Activated CD4-positive, alpha-beta memory T cell treated with anti-CD3 and anti-CD28 coated beads, Interleukin-2, amount 10 ng/mL, durations not matched to agents 7 days and 5 days (primary cell): ENCODE measurements at regions of chr14 and their contacts with region 1.

Region 1: DNA sequence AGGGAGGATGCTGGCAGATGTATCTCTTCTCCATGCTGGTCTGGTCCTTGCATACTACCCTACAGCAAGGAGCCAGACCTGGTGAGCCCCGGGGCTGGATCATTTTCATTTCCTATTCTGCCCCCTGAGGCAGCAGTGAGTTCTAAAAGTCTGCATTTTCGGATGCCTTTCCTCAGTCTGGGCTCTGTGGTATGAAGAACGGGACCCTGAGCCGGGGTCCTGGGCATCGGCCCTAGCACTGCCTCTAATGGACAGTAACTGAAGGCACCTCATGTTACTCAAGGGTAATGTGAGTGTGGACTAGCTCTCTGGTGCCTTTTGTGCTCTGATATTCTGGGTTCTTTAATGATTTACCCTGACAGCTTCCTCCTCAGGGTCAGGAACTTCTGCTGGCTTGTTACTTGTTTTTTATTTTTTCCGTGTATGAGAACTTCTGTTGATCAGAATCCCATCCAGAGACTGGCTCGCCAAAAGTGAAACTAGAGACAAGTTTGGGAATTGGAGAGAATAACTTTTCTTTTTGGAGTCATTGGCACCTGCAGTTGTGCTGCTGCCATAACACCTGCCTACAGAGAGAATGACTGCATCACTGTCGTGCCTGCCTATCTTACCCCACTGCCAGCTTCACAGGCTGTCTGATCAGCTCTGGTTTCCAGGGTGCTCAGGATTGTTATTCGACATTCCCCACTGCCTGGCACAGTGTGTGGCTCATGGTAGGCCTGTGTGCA is 62.3 kb downstream of the SUSD6 start:
- DNase-seq: no peak
- H3K4me3 Mint-ChIP-seq: peak overlapping the region; percentile 31
- H3K27ac Mint-ChIP-seq: peak overlapping the region; percentile 95
- H3K4me1 Mint-ChIP-seq: peaks cover 89% of the 10 kb centered on the region
- H3K27me3 Mint-ChIP-seq: no peaks in the 10 kb centered on the region

Region 2: DNA sequence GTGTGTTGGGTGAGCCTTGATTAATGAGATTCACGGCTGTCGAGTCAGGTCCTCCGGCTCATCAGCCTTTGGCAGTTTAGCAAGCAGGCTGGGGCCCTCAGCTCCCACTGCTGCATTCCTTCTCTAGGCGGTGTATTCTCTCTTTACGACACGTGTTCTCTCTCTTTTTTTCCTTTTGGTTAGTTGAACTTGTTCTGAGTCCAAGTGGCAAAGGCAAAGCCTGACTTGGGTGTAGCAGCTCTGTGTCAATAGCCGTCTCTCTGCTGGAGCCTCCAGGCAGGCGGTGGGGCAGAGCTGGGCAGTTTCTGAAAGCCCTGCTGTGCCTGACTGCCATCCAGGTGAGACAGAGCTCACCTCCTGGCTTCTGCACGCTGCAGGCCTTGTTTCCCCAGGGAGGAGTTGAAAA is 15.8 kb before region 1 on chr14:
- CTCF ChIA-PET with region 1: interaction called, 5 read pairs
- POLR2A ChIA-PET with region 1: interaction called, 16 read pairs
- DNase-seq: no peak
- H3K4me3 Mint-ChIP-seq: peak overlapping the region; percentile 26
- H3K27ac Mint-ChIP-seq: peak overlapping the region; percentile 61
- H3K4me1 Mint-ChIP-seq: peaks cover 93% of the 10 kb centered on the region
- H3K27me3 Mint-ChIP-seq: no peaks in the 10 kb centered on the region